Heart left ventricle (tissue), 16 donors: ENCODE measurements at regions of chr7 and their contacts with region 1.

Region 1: DNA sequence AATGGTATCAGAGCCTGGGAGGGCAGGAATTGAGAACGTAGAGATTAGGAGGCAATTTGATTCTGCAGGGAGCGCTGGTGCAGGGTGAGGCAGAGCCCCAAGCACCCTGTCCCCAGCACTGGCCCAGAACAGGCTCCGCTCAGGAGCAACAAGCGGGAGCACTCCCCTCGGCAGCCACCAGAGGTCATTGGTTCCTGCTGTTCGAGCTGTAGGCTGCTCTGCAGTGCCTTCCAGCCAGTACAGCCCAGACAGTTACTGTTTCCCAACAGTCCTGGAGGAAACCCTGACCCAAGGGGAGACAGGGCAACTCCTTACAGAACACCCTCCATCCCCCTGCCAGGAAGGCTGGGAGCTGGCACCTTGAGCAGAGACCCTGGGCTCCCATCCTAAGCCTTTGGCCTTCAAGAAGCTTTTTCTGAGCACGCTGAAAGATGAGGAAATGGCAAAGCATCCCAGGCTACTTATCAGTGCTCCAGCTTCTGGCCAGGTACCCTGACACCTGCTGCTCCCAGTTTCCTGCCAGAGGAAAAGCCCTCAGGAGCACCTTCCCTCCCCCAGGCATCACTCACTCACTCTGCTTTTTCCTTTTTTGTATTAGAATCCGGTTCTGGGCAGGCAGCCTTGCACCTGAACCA is 71.2 kb upstream of the EFCAB10 start:
- DNase-seq: peak; percentile 68 to 86 (median 78)
- ATAC-seq: peak; percentile 68 to 94 (median 90)
- H3K4me3 ChIP-seq: no peak overlapping the region
- H3K27ac ChIP-seq: no peak overlapping the region
- H3K4me1 ChIP-seq: peaks cover 0 to 25% (median 15%) of the 10 kb centered on the region in 12 donors
- H3K27me3 ChIP-seq: no peaks in the 10 kb centered on the region
- CTCF ChIP-seq: peak; percentile 81 to 91 (median 86)
- POLR2A ChIP-seq: no peak

Region 2: GRCh38 chr7:105691733-105692564 is 39.5 kb after region 1 on chr7:
- intact Hi-C with region 1: loop called in 1 of 10 experiments (anchors 2 kb)
- DNase-seq: peak; percentile 44 to 74 (median 51)
- ATAC-seq: peak; percentile 73 to 84 (median 76)
- H3K4me3 ChIP-seq: peak overlapping the region; percentile 6 to 70 (median 54)
- H3K27ac ChIP-seq: peak overlapping the region; percentile 21 to 88 (median 70)
- H3K4me1 ChIP-seq: peaks cover 0 to 24% (median 1%) of the 10 kb centered on the region in 12 donors
- H3K27me3 ChIP-seq: no peaks in the 10 kb centered on the region
- CTCF ChIP-seq: no peak
- POLR2A ChIP-seq: no peak

Region 3: DNA sequence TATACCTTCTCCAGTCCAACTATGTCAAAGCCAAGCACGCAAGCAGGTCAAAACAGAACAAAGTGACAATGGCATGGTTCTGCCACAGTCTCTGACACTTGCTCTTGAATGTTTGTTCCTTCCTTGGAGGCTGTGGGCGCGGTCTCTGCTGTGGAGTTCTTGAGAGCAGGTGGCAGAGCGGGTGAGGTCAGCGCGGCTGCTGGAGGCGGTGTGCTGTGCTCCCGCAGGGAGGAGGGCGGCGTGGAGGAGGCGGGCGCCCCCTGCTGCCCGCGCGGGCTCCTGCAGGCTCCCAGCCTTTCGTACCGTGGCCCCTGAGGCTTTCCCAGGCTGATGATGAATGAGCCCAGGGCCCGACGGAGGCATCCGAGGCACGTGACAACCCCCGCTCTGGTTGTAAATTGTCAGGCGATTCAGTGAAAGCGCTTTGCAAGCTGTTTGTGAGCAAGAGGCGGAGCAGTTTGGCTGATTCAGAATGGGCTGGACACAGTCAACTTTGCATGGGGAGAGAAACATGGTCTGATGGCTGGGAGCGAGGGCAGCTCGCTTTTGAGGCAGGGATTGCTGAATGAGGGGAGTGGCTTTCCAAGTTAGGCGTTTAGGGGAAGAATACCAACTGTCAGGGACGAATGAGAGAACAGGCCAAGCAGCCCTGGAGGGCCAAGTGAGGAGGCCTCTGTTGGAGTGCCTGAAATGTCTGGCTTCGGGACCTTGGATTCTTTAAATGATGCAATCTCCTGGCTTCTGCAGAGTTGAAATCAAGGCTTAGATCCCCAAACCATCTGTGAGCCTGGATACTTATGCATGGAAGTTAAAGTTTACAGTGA is 357.1 kb after region 1 on chr7:
- intact Hi-C with region 1: loop called in 6 of 10 experiments (anchors 2 to 10 kb)
- DNase-seq: peak; percentile 60 to 90 (median 76)
- ATAC-seq: peak; percentile 83 to 99 (median 95)
- H3K4me3 ChIP-seq: peak overlapping the region in 4 of 12 donors; percentile 5 to 22 (median 22)
- H3K27ac ChIP-seq: peak overlapping the region in 3 of 12 donors; percentile 17 to 53 (median 17)
- H3K4me1 ChIP-seq: peaks cover 0 to 15% (median 2%) of the 10 kb centered on the region in 12 donors
- H3K27me3 ChIP-seq: no peaks in the 10 kb centered on the region
- CTCF ChIP-seq: peak; percentile 89 to 98 (median 95)
- POLR2A ChIP-seq: peak in 1 of 2 donors; percentile 22

Region 4: GRCh38 chr7:106041140-106041717 is 388.8 kb after region 1 on chr7:
- intact Hi-C with region 1: loop called (anchors 1 to 5 kb)
- DNase-seq: no peak
- ATAC-seq: peak in 3 of 4 donors; percentile 7 to 23 (median 15)
- H3K4me3 ChIP-seq: no peak overlapping the region
- H3K27ac ChIP-seq: no peak overlapping the region
- H3K4me1 ChIP-seq: peaks cover 0 to 14% (median 4%) of the 10 kb centered on the region in 12 donors
- H3K27me3 ChIP-seq: peaks cover 0 to 3% (median 0%) of the 10 kb centered on the region in 9 donors
- CTCF ChIP-seq: peak; percentile 49 to 79 (median 62)
- POLR2A ChIP-seq: no peak

Region 5: GRCh38 chr7:106153891-106154449 is 501.5 kb after region 1 on chr7:
- intact Hi-C with region 1: loop called in 1 of 10 experiments (anchors 10 kb)
- DNase-seq: peak; percentile 73 to 89 (median 78)
- ATAC-seq: peak; percentile 89 to 99 (median 97)
- H3K4me3 ChIP-seq: peak overlapping the region in 4 of 12 donors; percentile 10 to 16 (median 13)
- H3K27ac ChIP-seq: no peak overlapping the region
- H3K4me1 ChIP-seq: peaks cover 0 to 19% (median 10%) of the 10 kb centered on the region in 12 donors
- H3K27me3 ChIP-seq: peaks cover 0 to 5% (median 0%) of the 10 kb centered on the region in 9 donors
- CTCF ChIP-seq: peak; percentile 84 to 99 (median 95)
- POLR2A ChIP-seq: no peak

Region 6: GRCh38 chr7:106166655-106167342 is 514.3 kb after region 1 on chr7:
- intact Hi-C with region 1: loop called in 4 of 10 experiments (anchors 5 to 10 kb)
- DNase-seq: peak in 2 of 5 donors; percentile 43 to 58
- ATAC-seq: peak; percentile 47 to 80 (median 70)
- H3K4me3 ChIP-seq: no peak overlapping the region
- H3K27ac ChIP-seq: peak overlapping the region in 5 of 12 donors; percentile 4 to 58 (median 21)
- H3K4me1 ChIP-seq: peaks cover 0 to 22% (median 4%) of the 10 kb centered on the region in 12 donors
- H3K27me3 ChIP-seq: no peaks in the 10 kb centered on the region
- CTCF ChIP-seq: peak; percentile 76 to 94 (median 86)
- POLR2A ChIP-seq: no peak